ENCODE measurements at regions of chr1 and their contacts with region 1.

Region 1: GRCh38 chr1:151534665-151535278 is 5.3 kb upstream of the TUFT1 start:
- DNase-seq: peak; percentile 71
- H3K4me3 ChIP-seq: no peak overlapping the region
- H3K27ac ChIP-seq: no peak overlapping the region
- H3K4me1 ChIP-seq: peaks cover 8% of the 10 kb centered on the region
- H3K27me3 ChIP-seq: no peaks in the 10 kb centered on the region
- CTCF ChIP-seq: peak; percentile 98

Region 2: DNA sequence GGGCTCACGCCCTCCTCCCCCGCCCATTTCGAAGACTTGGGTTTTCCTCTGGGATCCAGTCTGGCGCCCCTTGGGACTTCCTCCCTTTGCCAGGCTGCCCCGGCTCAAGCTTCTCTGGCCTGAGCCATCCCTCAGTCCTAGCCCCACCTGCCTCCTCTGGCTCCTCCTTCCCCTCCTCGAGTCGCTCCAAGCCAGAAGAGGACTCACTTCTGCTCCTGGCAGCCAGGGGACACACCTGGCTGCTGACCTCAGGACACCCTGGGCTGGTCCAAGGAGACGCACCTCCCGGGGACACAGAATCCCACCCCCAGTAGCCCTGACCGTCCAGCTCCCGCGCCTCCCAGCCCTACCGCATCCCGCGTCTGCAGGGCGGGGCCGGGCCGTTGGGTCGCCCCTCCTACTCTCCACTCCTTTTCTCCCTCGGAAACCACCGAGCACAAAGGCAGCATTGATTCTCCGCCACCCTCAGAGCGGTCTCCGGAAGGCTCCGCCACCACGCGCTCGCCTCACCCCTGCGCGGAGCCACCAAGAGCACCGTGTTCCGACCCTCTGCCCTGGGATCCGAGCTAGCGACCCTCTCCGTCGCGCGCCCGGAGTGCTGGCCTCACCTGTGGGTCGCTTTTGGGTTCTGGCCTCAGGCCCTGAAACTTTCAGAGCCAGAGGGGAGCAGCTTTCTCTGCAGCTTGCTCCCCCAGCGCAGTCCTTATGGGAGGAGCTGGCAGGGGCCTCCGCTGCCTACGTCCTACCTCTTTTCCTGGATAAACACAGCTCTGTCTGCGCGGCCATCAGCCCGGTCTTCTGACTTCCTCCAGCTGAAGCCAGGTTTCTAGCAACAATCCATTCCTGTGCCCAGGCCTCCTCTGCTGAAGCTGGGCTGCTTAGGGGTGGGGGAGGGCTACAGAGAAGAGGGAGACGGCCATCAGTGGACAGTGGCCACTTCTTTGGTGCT is 305.0 kb after region 1 on chr1 and contains the start of gene C2CD4D:
- CTCF ChIA-PET with region 1: no interaction called
- POLR2A ChIA-PET with region 1: no interaction called
- intact Hi-C with region 1: loop called (anchors 5 kb)
- DNase-seq: no peak
- H3K4me3 ChIP-seq: peak within 1 kb of the TSS; percentile 40
- H3K27ac ChIP-seq: no peak within 1 kb of the TSS
- H3K4me1 ChIP-seq: peaks cover 10% of the 10 kb centered on the region
- H3K27me3 ChIP-seq: peaks cover 53% of the 10 kb centered on the region
- CTCF ChIP-seq: no peak
- total RNA-seq, gene C2CD4D: not detected in 2 replicates

Measured in A673 (cell line).